ENCODE measurements at regions of chr2 and their contacts with region 1.

Region 1: DNA sequence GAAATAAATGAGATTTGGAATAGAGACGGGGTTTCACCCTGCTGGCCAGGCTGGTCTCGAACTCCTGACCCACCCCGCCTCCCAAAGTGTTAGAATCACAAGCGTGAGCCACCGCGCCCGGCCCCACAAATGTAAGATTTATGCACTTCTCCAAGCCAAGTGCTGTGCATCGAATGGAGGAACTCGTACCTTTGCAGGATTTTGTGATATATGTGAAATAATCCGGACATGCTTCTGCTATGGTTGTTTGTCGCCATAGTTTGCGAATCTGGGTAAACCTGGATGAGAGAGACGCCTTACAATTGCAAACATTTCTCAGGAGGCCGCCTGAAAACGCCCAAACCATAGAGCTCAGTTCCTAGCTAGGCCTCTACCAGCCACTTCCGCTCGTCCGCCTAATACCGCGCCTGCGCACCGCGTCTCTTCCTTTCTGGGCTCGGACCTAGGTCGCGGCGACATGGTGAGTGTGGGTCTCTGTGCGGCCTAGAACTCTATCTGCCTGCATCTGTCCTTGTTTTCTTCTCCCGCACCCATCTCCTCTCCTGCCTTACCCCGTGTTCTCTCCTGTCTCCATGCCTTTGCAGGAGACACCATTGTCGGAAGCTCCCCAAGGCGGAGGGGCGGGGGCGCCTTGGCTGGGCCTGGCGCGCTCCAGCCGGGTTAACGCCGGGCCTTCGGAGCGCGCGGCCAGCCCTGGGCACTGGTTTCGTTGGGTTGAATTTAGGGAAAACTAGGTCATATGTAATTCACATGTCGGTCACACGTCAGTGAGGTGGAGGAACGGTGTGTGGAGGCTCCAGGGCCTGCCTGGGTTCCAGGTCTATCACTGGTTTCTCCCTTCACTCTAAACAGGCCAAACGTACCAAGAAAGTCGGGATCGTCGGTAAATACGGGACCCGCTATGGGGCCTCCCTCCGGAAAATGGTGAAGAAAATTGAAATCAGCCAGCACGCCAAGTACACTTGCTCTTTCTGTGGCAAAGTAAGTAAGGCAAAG is at the start of gene RPL37A:
- DNase-seq: peak; percentile 75 to 96 (median 87)
- ATAC-seq: peak; percentile 96
- H3K4me3 ChIP-seq: peak within 1 kb of the TSS; percentile 78 to 89
- H3K4me3 Mint-ChIP-seq: peak within 1 kb of the TSS; percentile 99
- H3K27ac ChIP-seq: peak within 1 kb of the TSS; percentile 78 to 87
- H3K27ac Mint-ChIP-seq: peak within 1 kb of the TSS; percentile 94
- H3K4me1 ChIP-seq: peaks cover 25% of the 10 kb centered on the region
- H3K4me1 Mint-ChIP-seq: peaks cover 52% of the 10 kb centered on the region
- H3K27me3 ChIP-seq: no peaks in the 10 kb centered on the region
- H3K27me3 Mint-ChIP-seq: no peaks in the 10 kb centered on the region
- CTCF ChIP-seq: no peak
- total RNA-seq, gene RPL37A: 4,048 to 4,064 TPM

Region 2: DNA sequence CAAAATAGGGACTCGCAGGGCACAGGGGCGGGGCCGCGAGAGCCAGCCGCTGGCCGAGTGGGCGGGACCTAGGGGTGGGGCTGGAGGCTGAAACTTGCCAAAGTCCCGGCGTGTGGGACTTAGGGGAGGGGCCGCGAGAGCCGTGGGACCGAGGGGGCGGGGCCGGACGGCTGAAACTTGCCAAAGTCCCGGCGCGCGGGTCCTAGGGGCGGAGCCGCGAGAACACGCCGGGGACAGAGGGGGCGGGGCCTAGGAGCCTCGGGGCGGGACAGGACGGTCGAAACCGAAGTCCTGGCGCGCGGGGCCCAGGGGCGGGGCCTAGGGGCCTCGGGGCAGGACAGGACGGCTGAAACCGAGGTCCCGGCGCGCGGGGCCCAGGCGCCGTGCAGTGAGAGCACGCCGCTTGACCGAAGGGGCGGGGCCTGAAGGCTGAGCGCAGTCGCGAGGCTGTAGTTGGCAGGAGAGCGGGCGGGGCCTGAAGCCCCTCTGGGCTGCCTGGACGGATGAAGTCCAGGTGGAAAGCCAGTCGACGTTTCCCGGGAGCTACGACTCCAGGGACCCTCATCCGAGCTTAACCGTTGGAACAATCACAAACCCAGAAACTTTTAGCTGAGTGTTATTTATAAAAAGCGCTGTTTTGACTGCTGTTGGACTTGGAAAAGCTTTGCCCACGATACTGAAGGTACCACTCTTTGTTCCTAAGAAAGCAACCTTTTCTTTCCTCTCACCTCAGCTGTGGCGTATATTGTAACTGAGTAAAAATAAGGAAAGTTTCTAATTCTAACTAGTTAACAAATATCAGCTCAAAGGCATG is 1688.8 kb before region 1 on chr2:
- CTCF ChIA-PET with region 1: no interaction called
- POLR2A ChIA-PET with region 1: no interaction called
- intact Hi-C with region 1: loop called (anchors 2 to 10 kb)
- DNase-seq: peak; percentile 90 to 98 (median 97)
- ATAC-seq: peak; percentile 79
- H3K4me3 ChIP-seq: peak overlapping the region; percentile 88 to 98
- H3K4me3 Mint-ChIP-seq: peak overlapping the region; percentile 99
- H3K27ac ChIP-seq: peak overlapping the region; percentile 50 to 78
- H3K27ac Mint-ChIP-seq: peak overlapping the region; percentile 72
- H3K4me1 ChIP-seq: peaks cover 17% of the 10 kb centered on the region
- H3K4me1 Mint-ChIP-seq: peaks cover 33% of the 10 kb centered on the region
- H3K27me3 ChIP-seq: no peaks in the 10 kb centered on the region
- H3K27me3 Mint-ChIP-seq: no peaks in the 10 kb centered on the region
- CTCF ChIP-seq: no peak

Region 3: GRCh38 chr2:215973954-215974702 is 524.6 kb before region 1 on chr2:
- CTCF ChIA-PET with region 1: no interaction called
- POLR2A ChIA-PET with region 1: no interaction called
- intact Hi-C with region 1: no loop called
- DNase-seq: no peak
- ATAC-seq: no peak
- H3K4me3 ChIP-seq: no peak overlapping the region
- H3K4me3 Mint-ChIP-seq: no peak overlapping the region
- H3K27ac ChIP-seq: no peak overlapping the region
- H3K27ac Mint-ChIP-seq: peak overlapping the region; percentile 61
- H3K4me1 ChIP-seq: no peaks in the 10 kb centered on the region
- H3K4me1 Mint-ChIP-seq: peaks cover 7% of the 10 kb centered on the region
- H3K27me3 ChIP-seq: no peaks in the 10 kb centered on the region
- H3K27me3 Mint-ChIP-seq: no peaks in the 10 kb centered on the region
- CTCF ChIP-seq: no peak

Region 4: GRCh38 chr2:215984661-215985060 is 514.1 kb before region 1 on chr2:
- CTCF ChIA-PET with region 1: no interaction called
- POLR2A ChIA-PET with region 1: no interaction called
- intact Hi-C with region 1: no loop called
- DNase-seq: no peak
- ATAC-seq: no peak
- H3K4me3 ChIP-seq: no peak overlapping the region
- H3K4me3 Mint-ChIP-seq: no peak overlapping the region
- H3K27ac ChIP-seq: no peak overlapping the region
- H3K27ac Mint-ChIP-seq: no peak overlapping the region
- H3K4me1 ChIP-seq: no peaks in the 10 kb centered on the region
- H3K4me1 Mint-ChIP-seq: peaks cover 12% of the 10 kb centered on the region
- H3K27me3 ChIP-seq: no peaks in the 10 kb centered on the region
- H3K27me3 Mint-ChIP-seq: no peaks in the 10 kb centered on the region
- CTCF ChIP-seq: no peak

Region 5: GRCh38 chr2:216013080-216013909 is 485.4 kb before region 1 on chr2 and contains the start of gene MREG:
- CTCF ChIA-PET with region 1: no interaction called
- POLR2A ChIA-PET with region 1: no interaction called
- intact Hi-C with region 1: loop called in 1 of 2 experiments (anchors 5 kb)
- DNase-seq: peak; percentile 66 to 92 (median 83)
- ATAC-seq: peak; percentile 80
- H3K4me3 ChIP-seq: peak within 1 kb of the TSS; percentile 44 to 80
- H3K4me3 Mint-ChIP-seq: peak within 1 kb of the TSS; percentile 85
- H3K27ac ChIP-seq: peak within 1 kb of the TSS; percentile 1 to 3
- H3K27ac Mint-ChIP-seq: peak within 1 kb of the TSS; percentile 61
- H3K4me1 ChIP-seq: peaks cover 36% of the 10 kb centered on the region
- H3K4me1 Mint-ChIP-seq: peaks cover 65% of the 10 kb centered on the region
- H3K27me3 ChIP-seq: no peaks in the 10 kb centered on the region
- H3K27me3 Mint-ChIP-seq: no peaks in the 10 kb centered on the region
- CTCF ChIP-seq: peak; percentile 67
- total RNA-seq, gene MREG: 3.2 to 3.6 TPM

Region 6: DNA sequence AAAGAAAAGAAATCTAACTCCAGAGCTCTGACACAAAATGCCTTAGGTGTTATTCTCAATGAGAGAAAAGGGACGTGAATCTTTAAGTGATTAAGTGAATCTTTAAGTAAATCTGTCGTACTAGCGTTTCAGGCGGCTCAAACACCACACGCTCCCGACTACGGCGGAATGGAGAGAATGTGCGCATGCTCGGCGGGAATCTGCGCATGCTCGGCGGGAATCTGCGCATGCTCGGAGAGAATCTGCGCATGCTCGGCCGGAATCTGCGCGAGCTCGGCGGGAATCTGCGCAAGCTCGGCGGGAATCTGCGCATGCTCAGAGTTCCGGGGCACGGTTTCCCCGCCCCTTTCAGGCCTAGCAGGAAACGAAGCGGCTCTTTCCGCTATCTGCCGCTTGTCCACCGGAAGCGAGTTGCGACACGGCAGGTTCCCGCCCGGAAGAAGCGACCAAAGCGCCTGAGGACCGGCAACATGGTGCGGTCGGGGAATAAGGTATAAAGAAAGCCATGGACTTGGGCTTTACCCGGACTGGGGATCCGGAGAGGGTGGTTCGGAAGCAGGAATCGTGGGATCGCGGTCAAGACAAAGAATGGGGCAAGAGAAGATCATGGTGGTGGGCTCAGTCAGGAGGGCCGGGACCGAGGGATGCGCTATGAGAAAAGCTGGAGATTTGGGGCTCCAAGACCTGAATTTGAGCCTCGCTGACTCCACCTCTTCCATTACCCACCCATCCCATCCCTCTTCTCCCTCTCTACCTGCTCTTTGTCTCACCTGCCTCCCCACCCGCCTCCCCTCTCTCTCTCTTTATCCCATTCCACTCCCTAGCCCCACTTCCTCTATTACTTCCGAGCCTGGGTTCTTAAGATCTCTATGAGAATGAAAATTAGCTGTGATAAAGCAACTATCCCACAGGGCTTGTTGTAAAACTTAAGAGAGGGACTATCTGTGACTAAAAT is 389.5 kb before region 1 on chr2 and contains the start of gene XRCC5:
- CTCF ChIA-PET with region 1: no interaction called
- POLR2A ChIA-PET with region 1: no interaction called
- intact Hi-C with region 1: loop called (anchors 1 to 5 kb)
- DNase-seq: peak; percentile 93 to 99 (median 99)
- ATAC-seq: peak; percentile 84
- H3K4me3 ChIP-seq: peak within 1 kb of the TSS; percentile 96
- H3K4me3 Mint-ChIP-seq: peak within 1 kb of the TSS; percentile 100
- H3K27ac ChIP-seq: peak within 1 kb of the TSS; percentile 92 to 96
- H3K27ac Mint-ChIP-seq: peak within 1 kb of the TSS; percentile 100
- H3K4me1 ChIP-seq: peaks cover 46% of the 10 kb centered on the region
- H3K4me1 Mint-ChIP-seq: peaks cover 51% of the 10 kb centered on the region
- H3K27me3 ChIP-seq: no peaks in the 10 kb centered on the region
- H3K27me3 Mint-ChIP-seq: no peaks in the 10 kb centered on the region
- CTCF ChIP-seq: no peak
- total RNA-seq, gene XRCC5: 120 to 125 TPM

Region 7: DNA sequence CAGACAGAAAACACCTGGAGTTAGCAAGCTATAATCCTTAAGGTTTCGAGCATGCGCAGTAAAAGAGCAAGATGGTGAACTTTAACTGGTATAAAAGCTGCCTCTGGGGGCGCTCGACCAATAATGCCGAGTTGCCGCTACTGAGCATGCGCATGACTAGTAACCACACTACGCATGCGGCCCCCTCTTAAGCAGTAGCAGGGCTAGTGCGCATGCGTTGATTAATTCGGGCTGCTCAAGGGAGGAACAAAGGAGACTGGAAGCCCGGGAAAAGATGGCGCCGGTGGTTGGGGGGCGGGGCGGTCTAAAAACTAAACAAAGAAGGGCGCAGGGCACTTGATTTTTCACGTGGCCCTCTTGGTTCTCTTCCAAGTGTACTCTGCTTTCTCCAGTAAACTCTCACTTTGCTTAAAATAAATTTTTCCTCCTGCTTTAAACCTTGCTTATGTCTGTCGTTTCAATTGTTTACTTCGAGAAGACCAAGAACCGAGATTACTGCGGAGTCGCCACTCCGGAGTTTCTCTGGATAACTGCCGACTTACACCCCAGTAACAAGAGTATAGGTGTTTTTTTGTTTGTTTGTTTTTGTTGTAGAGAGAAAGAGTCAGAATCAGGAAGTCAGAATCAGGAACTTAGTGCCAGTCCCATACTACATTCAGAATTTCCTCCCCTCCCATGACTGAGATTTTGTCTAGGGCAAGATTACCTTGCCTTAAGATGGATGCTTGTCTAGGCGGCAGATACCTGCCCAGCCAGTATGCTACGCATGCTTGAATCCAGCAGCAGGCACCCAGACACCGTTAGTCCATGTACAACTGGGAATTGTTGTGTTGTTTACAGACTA is 383.8 kb before region 1 on chr2:
- CTCF ChIA-PET with region 1: no interaction called
- POLR2A ChIA-PET with region 1: no interaction called
- intact Hi-C with region 1: loop called in 1 of 2 experiments (anchors 5 kb)
- DNase-seq: peak; percentile 94 to 99 (median 97)
- ATAC-seq: peak; percentile 91
- H3K4me3 ChIP-seq: peak overlapping the region; percentile 58 to 79
- H3K4me3 Mint-ChIP-seq: peak overlapping the region; percentile 85
- H3K27ac ChIP-seq: peak overlapping the region; percentile 60 to 81
- H3K27ac Mint-ChIP-seq: peak overlapping the region; percentile 94
- H3K4me1 ChIP-seq: peaks cover 91% of the 10 kb centered on the region
- H3K4me1 Mint-ChIP-seq: peaks cover 92% of the 10 kb centered on the region
- H3K27me3 ChIP-seq: no peaks in the 10 kb centered on the region
- H3K27me3 Mint-ChIP-seq: no peaks in the 10 kb centered on the region
- CTCF ChIP-seq: peak; percentile 69

Region 8: DNA sequence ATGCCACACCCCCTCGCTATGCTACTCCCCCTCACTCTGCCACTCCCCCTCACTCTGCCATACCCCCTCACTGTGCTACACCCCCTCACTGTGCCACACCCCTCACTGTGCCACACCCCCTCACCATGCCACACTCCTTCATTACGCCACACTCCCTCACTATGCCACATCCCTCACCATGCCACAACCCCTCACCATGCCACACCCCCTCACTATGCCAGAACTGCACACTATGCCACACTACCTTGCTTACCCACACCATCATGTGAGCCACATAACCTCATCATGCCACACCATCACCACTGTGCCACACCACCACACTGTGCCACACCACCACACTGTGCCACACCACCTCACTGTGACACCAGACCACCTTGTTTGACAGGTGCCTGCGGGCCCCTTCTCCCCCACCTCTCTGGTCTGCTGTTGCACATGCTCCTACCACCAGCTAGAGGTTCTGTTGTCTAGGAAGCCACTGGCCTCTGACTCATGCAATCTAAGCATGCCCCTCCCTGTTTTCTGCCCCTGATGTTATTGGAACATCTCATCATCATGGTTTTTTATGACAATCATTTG is 148.4 kb before region 1 on chr2:
- CTCF ChIA-PET with region 1: no interaction called
- POLR2A ChIA-PET with region 1: interaction called, 3 read pairs
- intact Hi-C with region 1: loop called in 1 of 2 experiments (anchors 5 kb)
- DNase-seq: peak in 7 of 9 experiments; percentile 22 to 70 (median 58)
- ATAC-seq: peak; percentile 67
- H3K4me3 ChIP-seq: no peak overlapping the region
- H3K4me3 Mint-ChIP-seq: no peak overlapping the region
- H3K27ac ChIP-seq: peak overlapping the region in 1 of 2 experiments; percentile 74
- H3K27ac Mint-ChIP-seq: peak overlapping the region; percentile 78
- H3K4me1 ChIP-seq: peaks cover 80% of the 10 kb centered on the region
- H3K4me1 Mint-ChIP-seq: peaks cover 87% of the 10 kb centered on the region
- H3K27me3 ChIP-seq: no peaks in the 10 kb centered on the region
- H3K27me3 Mint-ChIP-seq: no peaks in the 10 kb centered on the region
- CTCF ChIP-seq: no peak

Region 9: DNA sequence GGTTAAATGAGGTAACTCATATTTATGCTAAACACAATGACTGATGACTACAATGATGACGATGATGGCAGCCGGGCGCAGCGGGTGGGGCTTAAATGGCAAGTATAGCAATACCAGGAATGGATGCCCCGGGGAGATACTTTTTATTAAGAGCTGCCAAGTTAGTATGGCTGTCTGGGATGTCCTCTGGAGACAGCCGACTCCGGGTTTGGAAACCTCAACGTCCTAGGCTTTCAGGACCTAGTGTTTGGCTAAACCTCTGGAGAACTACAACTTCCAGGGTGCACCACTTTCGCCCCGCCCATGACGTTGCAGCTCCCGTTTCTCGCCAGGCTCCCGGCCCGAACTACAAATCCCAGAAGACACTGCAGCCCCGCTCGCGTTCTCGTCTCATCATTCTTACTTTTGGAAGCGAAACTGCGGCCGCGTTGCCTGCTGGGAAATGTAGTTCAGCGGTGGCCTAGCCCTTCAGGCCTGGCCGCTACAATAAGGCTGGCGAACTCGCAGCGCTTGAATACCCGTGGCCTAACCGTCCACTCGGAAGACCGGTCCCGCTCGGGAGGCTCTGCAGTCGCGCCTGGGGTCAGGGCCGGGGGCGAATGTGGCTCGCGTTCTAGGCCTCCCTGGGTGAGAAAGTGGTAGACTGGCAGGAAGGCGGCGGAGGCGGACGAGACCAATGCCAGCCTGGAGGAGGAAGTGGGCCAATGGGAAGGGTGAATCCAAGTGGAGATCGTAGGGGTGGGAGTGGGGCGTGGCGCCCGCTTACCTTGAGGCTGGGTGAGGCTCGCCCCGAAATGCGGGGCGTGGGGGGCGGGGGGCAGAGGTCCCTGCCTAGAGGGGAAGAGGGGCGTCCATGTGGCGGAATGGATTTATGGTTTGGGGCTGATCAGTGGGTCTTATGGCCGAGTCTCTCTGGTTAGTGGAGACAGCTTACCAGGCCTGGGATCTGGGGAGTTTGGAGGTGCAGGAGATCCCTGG is 86.4 kb before region 1 on chr2 and contains the start of gene SMARCAL1:
- CTCF ChIA-PET with region 1: interaction called, 3 read pairs
- POLR2A ChIA-PET with region 1: interaction called, 4 read pairs
- intact Hi-C with region 1: loop called (anchors 1 kb)
- DNase-seq: peak; percentile 95 to 99 (median 98)
- ATAC-seq: peak; percentile 93
- H3K4me3 ChIP-seq: peak within 1 kb of the TSS; percentile 89 to 92
- H3K4me3 Mint-ChIP-seq: peak within 1 kb of the TSS; percentile 95
- H3K27ac ChIP-seq: peak within 1 kb of the TSS; percentile 68 to 90
- H3K27ac Mint-ChIP-seq: peak within 1 kb of the TSS; percentile 95
- H3K4me1 ChIP-seq: no peaks in the 10 kb centered on the region
- H3K4me1 Mint-ChIP-seq: peaks cover 26% of the 10 kb centered on the region
- H3K27me3 ChIP-seq: no peaks in the 10 kb centered on the region
- H3K27me3 Mint-ChIP-seq: no peaks in the 10 kb centered on the region
- CTCF ChIP-seq: no peak
- total RNA-seq, gene SMARCAL1: 4.6 to 5.3 TPM

Region 10: DNA sequence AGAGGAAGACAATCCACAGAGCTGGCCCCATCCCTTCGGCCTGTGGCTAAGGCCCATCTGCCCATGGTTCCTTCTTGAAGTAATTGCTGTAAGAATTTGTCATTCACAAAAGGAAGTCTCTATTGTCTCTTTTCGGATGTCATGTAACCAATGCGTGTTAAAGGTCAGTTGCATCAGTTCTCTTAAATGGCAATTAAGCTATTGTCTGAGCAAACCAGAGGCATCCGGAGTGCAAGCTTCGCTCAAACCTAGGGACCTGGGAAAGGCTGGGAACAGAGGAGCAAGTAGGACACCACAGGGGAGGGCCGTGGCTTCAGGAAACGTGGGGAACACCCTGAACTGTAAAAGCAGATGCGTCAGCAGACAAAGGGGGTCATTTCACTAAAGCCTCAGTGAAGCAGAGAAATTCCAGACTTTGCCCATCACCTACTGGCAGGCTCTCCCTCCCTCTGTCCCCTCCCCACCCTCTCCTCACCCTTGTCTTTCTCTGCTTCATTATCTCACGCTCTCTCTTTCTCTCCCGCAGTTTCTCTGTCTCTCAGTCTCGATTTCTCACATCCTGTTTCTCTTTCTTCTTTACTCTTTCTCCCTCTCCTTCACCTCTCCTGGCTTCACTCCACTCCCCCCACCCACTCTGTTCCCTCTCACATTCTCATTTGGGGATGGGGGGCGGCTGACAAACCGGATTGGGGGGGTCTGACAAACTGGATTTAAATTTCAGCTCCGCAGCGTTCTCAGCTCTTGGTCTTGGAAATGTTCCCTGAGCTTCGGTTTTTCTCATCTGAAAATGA is 565.7 kb after region 1 on chr2:
- CTCF ChIA-PET with region 1: no interaction called
- POLR2A ChIA-PET with region 1: no interaction called
- intact Hi-C with region 1: no loop called
- DNase-seq: no peak
- ATAC-seq: no peak
- H3K4me3 ChIP-seq: no peak overlapping the region
- H3K4me3 Mint-ChIP-seq: no peak overlapping the region
- H3K27ac ChIP-seq: no peak overlapping the region
- H3K27ac Mint-ChIP-seq: no peak overlapping the region
- H3K4me1 ChIP-seq: no peaks in the 10 kb centered on the region
- H3K4me1 Mint-ChIP-seq: no peaks in the 10 kb centered on the region
- H3K27me3 ChIP-seq: peaks cover 0 to 3% of the 10 kb centered on the region in 2 experiments
- H3K27me3 Mint-ChIP-seq: peaks cover 6% of the 10 kb centered on the region
- CTCF ChIP-seq: no peak